ENCODE measurements at regions of chr10 and their contacts with region 1.

Region 1: GRCh38 chr10:62050893-62051433 is 149.5 kb downstream of the ARID5B start:
- DNase-seq: peak; percentile 86
- H3K4me3 Mint-ChIP-seq: peak overlapping the region; percentile 98
- H3K27ac Mint-ChIP-seq: peak overlapping the region; percentile 99
- H3K4me1 Mint-ChIP-seq: peaks cover 75% of the 10 kb centered on the region
- H3K27me3 Mint-ChIP-seq: no peaks in the 10 kb centered on the region

Region 2: DNA sequence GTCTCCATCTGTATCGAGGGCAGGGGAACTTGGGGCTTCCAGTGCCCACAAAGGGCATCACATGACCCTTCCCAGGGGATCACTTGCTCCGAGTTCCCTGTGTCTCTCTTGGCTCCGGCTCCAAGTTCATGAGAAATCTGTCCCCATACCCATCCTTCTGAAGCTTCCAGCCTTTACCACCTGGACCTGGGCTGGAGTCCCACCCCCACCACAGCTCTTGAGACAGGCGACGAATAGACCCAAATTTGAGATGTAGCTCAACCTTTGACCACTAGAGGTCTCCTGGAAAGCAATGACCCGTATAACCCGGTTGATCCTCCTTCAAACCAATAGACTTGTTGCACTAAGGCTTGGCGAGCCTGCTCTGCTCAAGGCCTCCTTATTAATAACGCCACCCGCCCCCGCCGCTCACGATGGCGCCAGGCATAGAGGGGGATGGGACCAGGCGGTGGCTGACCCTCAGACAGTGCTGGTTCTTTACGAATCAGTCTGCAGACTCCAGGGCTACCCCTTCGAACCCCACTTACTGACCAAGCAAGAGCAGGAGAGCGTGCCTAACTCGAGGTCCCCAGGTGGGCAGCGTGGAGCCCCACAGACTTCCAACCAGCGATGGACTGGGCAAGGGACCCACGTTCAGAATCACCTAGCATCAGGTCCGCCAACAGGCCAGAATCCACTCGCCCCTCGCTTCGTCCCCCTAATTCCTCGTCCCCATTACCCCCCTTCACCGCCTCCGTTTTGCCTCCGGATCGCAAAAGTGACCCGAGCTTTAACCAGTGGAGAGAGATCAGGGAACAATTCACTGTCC is 153.9 kb before region 1 on chr10:
- CTCF ChIA-PET with region 1: interaction called, 37 read pairs
- POLR2A ChIA-PET with region 1: interaction called, 785 read pairs
- DNase-seq: peak; percentile 66
- H3K4me3 Mint-ChIP-seq: peak overlapping the region; percentile 68
- H3K27ac Mint-ChIP-seq: peak overlapping the region; percentile 98
- H3K4me1 Mint-ChIP-seq: peaks cover 29% of the 10 kb centered on the region
- H3K27me3 Mint-ChIP-seq: no peaks in the 10 kb centered on the region

Region 3: GRCh38 chr10:61943674-61944410 is 107.1 kb before region 1 on chr10:
- CTCF ChIA-PET with region 1: interaction called, 3 read pairs
- POLR2A ChIA-PET with region 1: interaction called, 142 read pairs
- DNase-seq: no peak
- H3K4me3 Mint-ChIP-seq: peak overlapping the region; percentile 68
- H3K27ac Mint-ChIP-seq: peak overlapping the region; percentile 87
- H3K4me1 Mint-ChIP-seq: peaks cover 56% of the 10 kb centered on the region
- H3K27me3 Mint-ChIP-seq: no peaks in the 10 kb centered on the region

Region 4: GRCh38 chr10:62019013-62019684 is 31.8 kb before region 1 on chr10:
- CTCF ChIA-PET with region 1: interaction called, 4 read pairs
- POLR2A ChIA-PET with region 1: interaction called, 67 read pairs
- DNase-seq: no peak
- H3K4me3 Mint-ChIP-seq: no peak overlapping the region
- H3K27ac Mint-ChIP-seq: peak overlapping the region; percentile 71
- H3K4me1 Mint-ChIP-seq: peaks cover 77% of the 10 kb centered on the region
- H3K27me3 Mint-ChIP-seq: no peaks in the 10 kb centered on the region

Region 5: DNA sequence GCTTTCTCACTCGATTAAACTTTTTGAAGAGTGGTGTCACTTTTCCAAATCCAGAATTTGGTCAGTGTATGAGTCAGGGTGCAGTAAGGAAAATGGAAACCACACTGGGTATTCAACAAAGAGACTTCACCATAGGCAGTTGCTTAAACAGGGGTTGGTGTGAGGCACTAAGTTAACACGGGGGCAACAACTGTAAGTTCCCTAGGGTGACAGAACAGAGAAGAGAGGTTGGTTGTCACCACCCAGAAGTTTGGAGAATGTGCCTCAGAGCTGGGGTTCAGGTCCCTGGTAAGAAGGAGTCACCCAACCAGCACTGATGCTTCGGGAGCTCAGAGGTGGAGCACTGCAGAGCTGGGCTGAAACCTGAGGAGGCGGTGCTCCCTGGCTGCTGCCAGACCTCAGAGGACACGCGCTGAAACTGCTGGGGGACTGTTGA is 20.9 kb after region 1 on chr10:
- CTCF ChIA-PET with region 1: no interaction called
- POLR2A ChIA-PET with region 1: interaction called, 440 read pairs
- DNase-seq: no peak
- H3K4me3 Mint-ChIP-seq: no peak overlapping the region
- H3K27ac Mint-ChIP-seq: peak overlapping the region; percentile 13
- H3K4me1 Mint-ChIP-seq: peaks cover 79% of the 10 kb centered on the region
- H3K27me3 Mint-ChIP-seq: no peaks in the 10 kb centered on the region

Region 6: GRCh38 chr10:62231371-62231770 is 180.4 kb after region 1 on chr10:
- CTCF ChIA-PET with region 1: no interaction called
- POLR2A ChIA-PET with region 1: interaction called, 32 read pairs
- DNase-seq: no peak
- H3K4me3 Mint-ChIP-seq: no peak overlapping the region
- H3K27ac Mint-ChIP-seq: no peak overlapping the region
- H3K4me1 Mint-ChIP-seq: peaks cover 3% of the 10 kb centered on the region
- H3K27me3 Mint-ChIP-seq: no peaks in the 10 kb centered on the region

Region 7: DNA sequence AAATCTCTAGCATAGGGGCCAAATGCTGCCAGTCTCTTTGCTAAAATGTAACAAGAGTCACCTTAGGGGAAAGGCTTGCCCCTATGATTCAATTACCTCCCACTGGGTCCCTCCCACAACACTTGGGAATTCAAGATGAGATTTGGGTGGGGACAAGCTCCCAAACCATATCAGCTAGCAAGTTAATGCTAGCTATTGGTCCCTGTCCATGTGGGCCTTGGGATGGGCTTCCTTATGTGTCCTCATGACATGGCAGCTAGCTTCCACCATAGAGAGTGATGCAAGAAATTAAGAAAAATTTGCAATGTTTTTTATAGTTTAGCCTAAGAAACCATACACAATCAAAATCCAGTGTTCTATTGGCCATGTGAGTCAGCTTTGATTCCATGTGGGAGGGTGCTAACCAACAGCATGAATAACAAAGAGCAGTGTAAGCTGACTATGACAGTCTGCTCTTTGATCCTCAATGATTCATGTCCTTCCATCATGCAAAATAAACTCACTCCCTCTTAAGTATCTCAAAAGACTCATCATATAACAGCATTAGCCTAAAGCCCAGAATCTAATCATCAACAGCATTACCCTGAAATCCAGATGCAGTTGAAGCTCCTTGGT is 301.5 kb after region 1 on chr10:
- CTCF ChIA-PET with region 1: no interaction called
- POLR2A ChIA-PET with region 1: no interaction called
- DNase-seq: no peak
- H3K4me3 Mint-ChIP-seq: no peak overlapping the region
- H3K27ac Mint-ChIP-seq: no peak overlapping the region
- H3K4me1 Mint-ChIP-seq: peaks cover 1% of the 10 kb centered on the region
- H3K27me3 Mint-ChIP-seq: no peaks in the 10 kb centered on the region